Dorsolateral prefrontal cortex (tissue), 120 donors: ENCODE measurements at regions of chr11 and their contacts with region 1.

Region 1: GRCh38 chr11:67583247-67584204 is at the start of gene GSTP1:
- DNase-seq: peak; percentile 76 to 95 (median 88)
- H3K4me3 ChIP-seq: peak within 1 kb of the TSS; percentile 55 to 89 (median 79)
- H3K27ac ChIP-seq: peak within 1 kb of the TSS; percentile 79 to 99 (median 96)
- H3K27me3 ChIP-seq: no peaks in the 10 kb centered on the region
- CTCF ChIP-seq: peak; percentile 27 to 88 (median 74)
- total RNA-seq, gene GSTP1: 145 to 281 (median 207) TPM

Region 2: GRCh38 chr11:66466225-66467027 is 1117.1 kb before region 1 on chr11 and contains the start of gene PELI3:
- intact Hi-C with region 1: loop called in 1 of 2 experiments (anchors 10 kb)
- DNase-seq: peak; percentile 86 to 96 (median 92)
- H3K4me3 ChIP-seq: peak within 1 kb of the TSS; percentile 43 to 89 (median 78)
- H3K27ac ChIP-seq: peak within 1 kb of the TSS in 53 of 59 donors; percentile 9 to 87 (median 76)
- H3K27me3 ChIP-seq: no peaks in the 10 kb centered on the region
- CTCF ChIP-seq: peak in 7 of 56 donors; percentile 6 to 35 (median 9)
- total RNA-seq, gene PELI3: 33.1 to 92.5 (median 61.0) TPM

Region 3: GRCh38 chr11:67606492-67607201 is 23.1 kb after region 1 on chr11 and contains the start of gene NDUFV1:
- intact Hi-C with region 1: loop called (anchors 1 to 2 kb)
- DNase-seq: peak; percentile 92 to 99 (median 97)
- H3K4me3 ChIP-seq: peak within 1 kb of the TSS; percentile 71 to 100 (median 98)
- H3K27ac ChIP-seq: peak within 1 kb of the TSS in 58 of 59 donors; percentile 2 to 96 (median 83)
- H3K27me3 ChIP-seq: no peaks in the 10 kb centered on the region
- CTCF ChIP-seq: peak; percentile 21 to 96 (median 83)
- total RNA-seq, gene NDUFV1: 176 to 398 (median 251) TPM